Activated B cell treated with CpG ODN at 0.5 μM for 24 hours (primary cell): ENCODE measurements at regions of chr9 and their contacts with region 1.

Region 1: DNA sequence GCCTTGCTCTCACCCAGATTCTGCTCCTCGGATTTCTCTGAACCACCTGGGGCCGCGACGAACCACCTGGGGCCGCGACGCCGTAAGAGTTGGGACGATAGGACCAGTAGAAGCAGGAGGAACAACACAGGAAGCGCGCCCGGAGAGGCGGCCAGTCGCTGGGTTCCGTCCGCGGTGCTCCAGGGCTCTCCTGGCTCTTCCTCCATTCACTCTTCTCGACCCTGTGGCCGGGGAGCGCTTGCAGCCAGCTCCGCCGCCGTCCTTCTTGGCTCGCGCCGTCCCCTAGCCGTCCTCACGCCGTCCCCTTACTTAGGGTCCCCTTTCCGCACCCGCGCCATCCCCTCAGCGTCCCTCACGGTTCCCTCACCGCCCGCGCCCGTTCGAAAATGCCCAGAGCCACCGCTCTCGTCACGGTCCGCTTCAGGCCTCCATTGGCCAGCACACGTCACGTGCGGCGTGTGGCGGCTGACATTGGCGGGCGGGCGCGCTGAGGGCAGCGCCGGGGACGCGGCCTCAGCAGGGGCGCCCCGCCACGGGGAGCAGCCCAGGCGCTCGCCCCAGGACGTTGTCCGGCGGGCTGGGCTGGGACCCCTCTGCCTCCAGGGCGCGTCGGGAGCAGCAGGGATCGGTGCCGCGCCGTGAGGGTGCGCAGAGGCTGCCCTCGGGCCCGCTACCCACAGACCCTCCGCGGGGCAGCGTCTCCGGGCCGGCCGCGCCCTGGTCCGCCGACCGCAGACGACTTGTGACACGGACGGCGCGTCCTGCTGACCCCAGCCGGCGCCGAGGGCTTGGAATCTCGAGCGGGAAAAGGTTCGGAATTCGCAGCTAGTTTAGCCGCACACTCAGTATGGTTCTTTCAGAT is 53.7 kb upstream of the PTPDC1 start:
- DNase-seq: peak; percentile 74
- ATAC-seq: peak; percentile 98
- H3K4me3 Mint-ChIP-seq: peak overlapping the region; percentile 91
- H3K27ac Mint-ChIP-seq: peak overlapping the region; percentile 91
- H3K4me1 Mint-ChIP-seq: peaks cover 19% of the 10 kb centered on the region
- H3K27me3 Mint-ChIP-seq: no peaks in the 10 kb centered on the region
- CTCF ChIP-seq: no peak

Region 2: DNA sequence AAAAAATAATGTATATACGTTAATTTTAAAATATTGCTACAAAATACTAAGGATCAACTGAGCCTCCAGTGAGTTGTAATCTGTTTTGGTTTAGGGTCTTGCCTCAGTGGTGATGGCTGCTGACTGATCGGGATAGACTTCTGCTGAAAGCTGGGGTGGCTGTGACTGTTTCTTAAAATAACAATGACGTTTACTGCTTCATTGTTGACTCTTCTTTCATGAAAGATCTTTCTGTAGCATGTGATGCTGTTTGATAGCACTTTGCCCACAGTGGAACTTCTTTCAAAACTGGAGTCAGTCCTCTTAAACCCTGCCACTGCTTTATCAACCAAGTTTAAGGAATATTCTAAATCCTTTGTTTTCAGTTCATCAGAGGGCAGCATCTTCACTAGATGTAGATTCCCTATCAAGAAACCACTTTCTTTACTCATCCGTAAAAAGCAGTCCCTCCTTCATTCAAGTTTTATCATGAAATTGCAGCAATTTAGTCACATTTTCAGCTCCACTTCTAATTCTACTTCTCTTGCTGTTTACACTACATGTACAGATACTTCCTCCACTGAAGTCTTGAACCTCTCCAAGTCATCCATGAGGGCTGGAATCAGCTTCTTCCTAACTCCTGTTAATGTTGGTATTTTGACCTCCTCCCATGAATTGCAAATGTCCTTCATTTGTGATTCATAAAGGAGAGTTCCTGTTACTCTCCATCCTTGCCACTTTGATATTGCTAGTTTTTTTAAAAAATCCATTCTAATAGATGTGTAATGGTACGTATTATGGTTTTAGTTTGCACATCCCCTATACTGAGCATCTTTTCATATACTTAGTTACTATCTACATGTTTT is 12.2 kb after region 1 on chr9:
- CTCF ChIA-PET with region 1: no interaction called
- POLR2A ChIA-PET with region 1: no interaction called
- intact Hi-C with region 1: no loop called
- DNase-seq: no peak
- ATAC-seq: no peak
- H3K4me3 Mint-ChIP-seq: no peak overlapping the region
- H3K27ac Mint-ChIP-seq: no peak overlapping the region
- H3K4me1 Mint-ChIP-seq: no peaks in the 10 kb centered on the region
- H3K27me3 Mint-ChIP-seq: no peaks in the 10 kb centered on the region
- CTCF ChIP-seq: no peak

Region 3: GRCh38 chr9:94259077-94259892 is 228.7 kb after region 1 on chr9 and contains the start of gene ZNF169:
- CTCF ChIA-PET with region 1: no interaction called
- POLR2A ChIA-PET with region 1: no interaction called
- intact Hi-C with region 1: loop called (anchors 1 kb)
- DNase-seq: peak; percentile 78
- ATAC-seq: peak; percentile 100
- H3K4me3 Mint-ChIP-seq: peak within 1 kb of the TSS; percentile 100
- H3K27ac Mint-ChIP-seq: peak within 1 kb of the TSS; percentile 95
- H3K4me1 Mint-ChIP-seq: peaks cover 36% of the 10 kb centered on the region
- H3K27me3 Mint-ChIP-seq: peaks cover 9% of the 10 kb centered on the region
- CTCF ChIP-seq: no peak
- total RNA-seq, gene ZNF169: 13.6 and 18.3 TPM in 2 replicates